Naive thymus-derived CD4-positive, alpha-beta T cell (primary cell): ENCODE measurements at regions of chr9 and their contacts with region 1.

Region 1: DNA sequence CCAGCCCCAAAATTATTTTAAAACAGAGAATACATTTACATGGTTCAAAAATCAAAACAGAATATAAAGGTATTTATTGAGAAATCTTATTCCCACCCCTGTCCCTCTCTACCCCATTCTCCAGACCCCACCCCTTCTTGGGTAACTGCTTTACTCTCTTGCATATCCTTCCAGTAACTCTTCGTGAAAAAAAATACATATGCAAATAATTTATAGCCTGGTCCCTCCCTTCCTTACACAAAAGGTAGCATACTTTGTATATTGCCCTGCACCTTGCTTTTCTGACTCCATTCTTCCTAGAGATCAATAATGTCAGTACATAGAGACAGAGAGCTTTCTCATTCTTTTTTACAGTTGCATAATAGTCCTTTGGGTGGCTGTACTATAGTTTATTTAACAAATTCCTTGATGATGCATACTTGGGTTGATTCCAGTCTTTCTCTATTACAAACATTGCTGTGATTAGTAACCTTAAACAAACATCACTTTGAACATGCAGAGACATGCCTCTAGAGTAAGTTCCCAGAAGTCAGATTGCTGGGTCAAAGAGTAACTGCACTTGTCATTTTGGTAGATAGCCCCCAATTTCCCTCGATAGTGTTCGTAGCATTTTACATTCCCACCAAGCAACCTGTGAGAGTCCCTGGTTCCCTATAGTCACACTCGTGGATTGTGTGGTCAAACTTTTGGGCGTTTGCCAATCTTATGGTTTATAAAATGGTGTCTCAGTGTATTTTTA is 47.8 kb downstream of the STOM start:
- DNase-seq: no peak
- ATAC-seq: no peak
- H3K4me3 ChIP-seq: no peak overlapping the region
- H3K4me3 Mint-ChIP-seq: no peak overlapping the region
- H3K27ac ChIP-seq: no peak overlapping the region
- H3K27ac Mint-ChIP-seq: no peak overlapping the region
- H3K4me1 ChIP-seq: peaks cover 5 to 16% of the 10 kb centered on the region in 2 donors
- H3K4me1 Mint-ChIP-seq: peaks cover 0 to 35% (median 7%) of the 10 kb centered on the region in 7 donors
- H3K27me3 ChIP-seq: no peaks in the 10 kb centered on the region
- H3K27me3 Mint-ChIP-seq: no peaks in the 10 kb centered on the region

Region 2: DNA sequence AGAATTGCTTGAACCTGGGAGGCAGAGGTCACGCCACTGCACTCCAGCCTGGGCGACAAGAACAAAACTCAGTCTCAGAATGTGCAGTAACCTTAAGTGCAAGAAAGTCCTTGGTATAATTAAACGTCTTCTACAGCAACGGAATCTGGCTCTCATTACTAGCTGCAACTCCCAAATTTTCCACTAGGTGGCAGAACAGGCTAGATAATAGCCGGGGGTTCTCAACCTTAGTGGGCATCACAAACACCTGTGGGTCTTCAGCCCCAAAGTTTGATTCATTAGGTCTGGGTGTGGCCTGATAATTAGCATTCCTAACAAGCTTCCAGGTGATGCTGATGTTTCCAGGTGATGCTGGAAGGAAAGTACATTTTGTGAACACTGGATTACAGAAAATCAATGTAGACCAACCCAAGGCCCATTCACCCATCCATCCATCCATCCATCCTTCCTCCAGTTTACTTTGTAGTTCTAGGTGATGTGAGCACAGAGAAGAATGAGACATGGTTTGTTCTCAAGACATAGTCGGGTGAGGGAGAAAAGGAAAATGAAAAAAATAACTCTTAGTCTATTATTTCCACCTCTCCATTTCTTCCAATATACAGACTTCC is 566.3 kb before region 1 on chr9:
- CTCF ChIA-PET with region 1: interaction called, 3 read pairs
- POLR2A ChIA-PET with region 1: no interaction called
- intact Hi-C with region 1: loop called in 1 of 2 experiments (anchors 5 kb)
- DNase-seq: peak; percentile 42 to 80 (median 65)
- ATAC-seq: peak; percentile 83
- H3K4me3 ChIP-seq: no peak overlapping the region
- H3K4me3 Mint-ChIP-seq: no peak overlapping the region
- H3K27ac ChIP-seq: peak overlapping the region; percentile 22
- H3K27ac Mint-ChIP-seq: peak overlapping the region in 8 of 9 donors; percentile 5 to 77 (median 42)
- H3K4me1 ChIP-seq: no peaks in the 10 kb centered on the region
- H3K4me1 Mint-ChIP-seq: peaks cover 3 to 16% (median 7%) of the 10 kb centered on the region in 7 donors
- H3K27me3 ChIP-seq: no peaks in the 10 kb centered on the region
- H3K27me3 Mint-ChIP-seq: no peaks in the 10 kb centered on the region

Region 3: GRCh38 chr9:120778758-120779157 is 543.4 kb before region 1 on chr9:
- CTCF ChIA-PET with region 1: no interaction called
- POLR2A ChIA-PET with region 1: no interaction called
- intact Hi-C with region 1: no loop called
- DNase-seq: no peak
- ATAC-seq: no peak
- H3K4me3 ChIP-seq: no peak overlapping the region
- H3K4me3 Mint-ChIP-seq: no peak overlapping the region
- H3K27ac ChIP-seq: no peak overlapping the region
- H3K27ac Mint-ChIP-seq: peak overlapping the region in 2 of 9 donors; percentile 76 to 79
- H3K4me1 ChIP-seq: peaks cover 0 to 8% of the 10 kb centered on the region in 2 donors
- H3K4me1 Mint-ChIP-seq: peaks cover 7 to 33% (median 23%) of the 10 kb centered on the region in 7 donors
- H3K27me3 ChIP-seq: no peaks in the 10 kb centered on the region
- H3K27me3 Mint-ChIP-seq: no peaks in the 10 kb centered on the region

Region 4: DNA sequence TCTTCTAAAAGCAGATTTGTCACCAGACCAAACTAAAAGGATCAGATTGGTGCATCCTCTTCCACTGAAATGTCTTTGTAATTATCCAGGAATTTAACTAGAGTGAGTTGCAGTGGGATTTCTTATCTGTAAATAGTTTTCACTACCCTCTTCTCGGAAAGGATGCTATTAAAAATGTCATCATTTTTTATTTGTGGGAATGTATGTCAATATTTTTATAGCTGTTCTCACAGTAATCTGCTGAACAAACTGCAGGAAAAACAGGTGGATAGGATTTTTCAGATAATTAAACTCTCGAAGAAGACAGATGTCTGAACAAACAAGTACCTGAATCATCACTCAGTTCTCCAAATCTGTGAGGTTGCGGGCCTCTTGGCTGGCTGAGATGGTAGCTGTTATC is 183.2 kb before region 1 on chr9:
- CTCF ChIA-PET with region 1: no interaction called
- POLR2A ChIA-PET with region 1: no interaction called
- intact Hi-C with region 1: no loop called
- DNase-seq: no peak
- ATAC-seq: no peak
- H3K4me3 ChIP-seq: no peak overlapping the region
- H3K4me3 Mint-ChIP-seq: no peak overlapping the region
- H3K27ac ChIP-seq: no peak overlapping the region
- H3K27ac Mint-ChIP-seq: peak overlapping the region in 5 of 9 donors; percentile 31 to 85 (median 64)
- H3K4me1 ChIP-seq: peaks cover 2 to 10% of the 10 kb centered on the region in 2 donors
- H3K4me1 Mint-ChIP-seq: peaks cover 12 to 35% (median 33%) of the 10 kb centered on the region in 7 donors
- H3K27me3 ChIP-seq: no peaks in the 10 kb centered on the region
- H3K27me3 Mint-ChIP-seq: no peaks in the 10 kb centered on the region

Region 5: GRCh38 chr9:121213136-121213806 is 108.9 kb before region 1 on chr9:
- CTCF ChIA-PET with region 1: interaction called, 4 read pairs
- POLR2A ChIA-PET with region 1: no interaction called
- intact Hi-C with region 1: loop called (anchors 1 kb)
- DNase-seq: peak; percentile 19 to 69 (median 51)
- ATAC-seq: peak; percentile 87
- H3K4me3 ChIP-seq: no peak overlapping the region
- H3K4me3 Mint-ChIP-seq: no peak overlapping the region
- H3K27ac ChIP-seq: no peak overlapping the region
- H3K27ac Mint-ChIP-seq: peak overlapping the region in 4 of 9 donors; percentile 7 to 49 (median 19)
- H3K4me1 ChIP-seq: no peaks in the 10 kb centered on the region
- H3K4me1 Mint-ChIP-seq: peaks cover 0 to 20% (median 11%) of the 10 kb centered on the region in 7 donors
- H3K27me3 ChIP-seq: no peaks in the 10 kb centered on the region
- H3K27me3 Mint-ChIP-seq: no peaks in the 10 kb centered on the region

Region 6: GRCh38 chr9:121350993-121351561 is 28.9 kb after region 1 on chr9:
- CTCF ChIA-PET with region 1: interaction called, 12 read pairs
- POLR2A ChIA-PET with region 1: no interaction called
- intact Hi-C with region 1: loop called in 1 of 2 experiments (anchors 1 kb)
- DNase-seq: no peak
- ATAC-seq: no peak
- H3K4me3 ChIP-seq: no peak overlapping the region
- H3K4me3 Mint-ChIP-seq: no peak overlapping the region
- H3K27ac ChIP-seq: no peak overlapping the region
- H3K27ac Mint-ChIP-seq: no peak overlapping the region
- H3K4me1 ChIP-seq: peaks cover 0 to 46% of the 10 kb centered on the region in 2 donors
- H3K4me1 Mint-ChIP-seq: peaks cover 0 to 51% (median 8%) of the 10 kb centered on the region in 7 donors
- H3K27me3 ChIP-seq: no peaks in the 10 kb centered on the region
- H3K27me3 Mint-ChIP-seq: no peaks in the 10 kb centered on the region

Region 7: DNA sequence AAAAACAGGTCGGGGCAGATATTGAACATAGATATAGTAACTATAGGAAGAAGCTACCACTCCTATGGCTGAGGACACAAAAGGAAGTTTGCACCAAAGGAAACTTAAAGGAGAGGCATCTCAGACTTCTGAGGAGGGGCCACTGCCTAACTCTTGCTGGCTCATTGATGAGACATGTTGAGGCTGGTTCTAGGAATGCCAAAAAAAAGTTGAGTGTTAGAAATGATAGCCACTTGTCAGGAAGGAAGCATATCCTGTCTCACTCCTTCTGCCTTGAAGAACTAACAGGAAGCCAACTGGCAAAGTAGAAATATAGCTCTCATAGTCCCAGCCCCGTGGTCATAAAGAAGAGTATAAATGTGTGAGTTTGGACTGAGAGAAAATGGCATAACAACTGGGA is 71.1 kb after region 1 on chr9:
- CTCF ChIA-PET with region 1: interaction called, 190 read pairs
- POLR2A ChIA-PET with region 1: no interaction called
- intact Hi-C with region 1: no loop called
- DNase-seq: no peak
- ATAC-seq: no peak
- H3K4me3 ChIP-seq: no peak overlapping the region
- H3K4me3 Mint-ChIP-seq: peak overlapping the region in 2 of 10 donors; percentile 32 to 45
- H3K27ac ChIP-seq: no peak overlapping the region
- H3K27ac Mint-ChIP-seq: peak overlapping the region in 1 of 9 donors; percentile 14
- H3K4me1 ChIP-seq: no peaks in the 10 kb centered on the region
- H3K4me1 Mint-ChIP-seq: peaks cover 8 to 30% (median 9%) of the 10 kb centered on the region in 7 donors
- H3K27me3 ChIP-seq: no peaks in the 10 kb centered on the region
- H3K27me3 Mint-ChIP-seq: no peaks in the 10 kb centered on the region

Region 8: GRCh38 chr9:121498150-121498486 is 175.9 kb after region 1 on chr9:
- CTCF ChIA-PET with region 1: no interaction called
- POLR2A ChIA-PET with region 1: no interaction called
- intact Hi-C with region 1: loop called in 1 of 2 experiments (anchors 5 kb)
- DNase-seq: peak in 6 of 9 donors; percentile 18 to 41 (median 22)
- ATAC-seq: peak; percentile 67
- H3K4me3 ChIP-seq: peak overlapping the region; percentile 33
- H3K4me3 Mint-ChIP-seq: peak overlapping the region; percentile 70 to 89 (median 80)
- H3K27ac ChIP-seq: no peak overlapping the region
- H3K27ac Mint-ChIP-seq: no peak overlapping the region
- H3K4me1 ChIP-seq: peaks cover 4 to 10% of the 10 kb centered on the region in 2 donors
- H3K4me1 Mint-ChIP-seq: peaks cover 16 to 26% (median 20%) of the 10 kb centered on the region in 7 donors
- H3K27me3 ChIP-seq: peaks cover 3 to 8% of the 10 kb centered on the region in 2 donors
- H3K27me3 Mint-ChIP-seq: peaks cover 58 to 68% (median 63%) of the 10 kb centered on the region in 5 donors

Region 9: DNA sequence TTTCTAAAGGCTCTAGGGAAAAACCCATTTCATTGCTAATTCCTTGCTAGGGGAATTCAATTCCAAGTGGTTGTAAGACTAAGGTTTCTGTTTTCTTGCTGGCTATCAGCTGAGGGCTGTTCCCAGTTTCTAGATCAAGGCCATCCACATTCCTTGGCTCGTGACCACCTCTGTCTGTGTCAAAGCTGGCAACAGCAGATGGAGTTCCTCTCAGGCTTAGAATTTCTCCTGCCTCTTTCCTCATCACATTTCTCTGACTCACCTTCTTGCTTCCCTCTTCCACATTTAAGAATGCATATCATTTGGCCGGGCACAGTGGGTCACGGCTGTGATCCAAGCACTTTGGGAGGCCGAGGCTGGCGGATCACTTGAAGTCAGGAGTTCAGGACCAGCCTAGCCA is 348.2 kb after region 1 on chr9:
- CTCF ChIA-PET with region 1: no interaction called
- POLR2A ChIA-PET with region 1: no interaction called
- intact Hi-C with region 1: no loop called
- DNase-seq: no peak
- ATAC-seq: no peak
- H3K4me3 ChIP-seq: no peak overlapping the region
- H3K4me3 Mint-ChIP-seq: no peak overlapping the region
- H3K27ac ChIP-seq: no peak overlapping the region
- H3K27ac Mint-ChIP-seq: no peak overlapping the region
- H3K4me1 ChIP-seq: no peaks in the 10 kb centered on the region
- H3K4me1 Mint-ChIP-seq: no peaks in the 10 kb centered on the region
- H3K27me3 ChIP-seq: no peaks in the 10 kb centered on the region
- H3K27me3 Mint-ChIP-seq: peaks cover 0 to 42% (median 16%) of the 10 kb centered on the region in 5 donors